Dorsolateral prefrontal cortex (tissue), 120 donors: ENCODE measurements at regions of chr11 and their contacts with region 1.

Region 1: DNA sequence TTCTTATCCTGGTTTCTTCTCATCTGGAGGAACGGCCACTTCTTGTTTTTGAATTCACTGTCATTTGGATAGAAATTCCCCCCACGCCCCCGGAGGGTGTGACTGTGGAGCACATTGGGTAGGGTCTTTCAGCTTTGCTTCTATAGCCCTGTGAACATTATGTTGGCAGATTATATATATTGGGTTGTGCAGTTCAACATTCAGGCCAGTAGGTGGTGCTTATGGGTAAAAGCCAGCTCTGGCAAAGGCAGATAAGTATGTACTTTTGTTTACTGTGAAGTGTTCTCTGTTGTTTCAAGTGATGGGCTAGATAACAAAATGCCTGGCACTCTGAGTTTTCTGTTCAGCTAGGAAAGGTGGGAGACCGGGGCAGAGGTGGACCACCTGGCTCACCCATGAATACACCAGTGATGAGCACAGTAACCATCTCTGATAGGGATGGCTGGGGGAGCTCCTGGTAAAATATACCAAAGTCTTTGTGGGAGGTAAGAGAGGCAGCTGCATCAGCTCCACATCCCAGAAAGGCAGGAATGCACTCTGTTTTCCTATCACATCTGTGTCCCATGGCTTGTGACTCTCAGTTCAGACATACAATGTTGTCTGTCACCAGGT is 1348.2 kb upstream of the RAG2 start:
- DNase-seq: no peak
- H3K4me3 ChIP-seq: no peak overlapping the region
- H3K27ac ChIP-seq: no peak overlapping the region
- H3K27me3 ChIP-seq: no peaks in the 10 kb centered on the region
- CTCF ChIP-seq: peak in 50 of 56 donors; percentile 16 to 66 (median 41)

Region 2: GRCh38 chr11:37907436-37908218 is 38.6 kb before region 1 on chr11:
- intact Hi-C with region 1: loop called in 1 of 2 experiments (anchors 2 kb)
- DNase-seq: peak in 1 of 10 donors; percentile 23
- H3K4me3 ChIP-seq: no peak overlapping the region
- H3K27ac ChIP-seq: no peak overlapping the region
- H3K27me3 ChIP-seq: no peaks in the 10 kb centered on the region
- CTCF ChIP-seq: no peak